ENCODE measurements at regions of chr6 and their contacts with region 1.

Region 1: DNA sequence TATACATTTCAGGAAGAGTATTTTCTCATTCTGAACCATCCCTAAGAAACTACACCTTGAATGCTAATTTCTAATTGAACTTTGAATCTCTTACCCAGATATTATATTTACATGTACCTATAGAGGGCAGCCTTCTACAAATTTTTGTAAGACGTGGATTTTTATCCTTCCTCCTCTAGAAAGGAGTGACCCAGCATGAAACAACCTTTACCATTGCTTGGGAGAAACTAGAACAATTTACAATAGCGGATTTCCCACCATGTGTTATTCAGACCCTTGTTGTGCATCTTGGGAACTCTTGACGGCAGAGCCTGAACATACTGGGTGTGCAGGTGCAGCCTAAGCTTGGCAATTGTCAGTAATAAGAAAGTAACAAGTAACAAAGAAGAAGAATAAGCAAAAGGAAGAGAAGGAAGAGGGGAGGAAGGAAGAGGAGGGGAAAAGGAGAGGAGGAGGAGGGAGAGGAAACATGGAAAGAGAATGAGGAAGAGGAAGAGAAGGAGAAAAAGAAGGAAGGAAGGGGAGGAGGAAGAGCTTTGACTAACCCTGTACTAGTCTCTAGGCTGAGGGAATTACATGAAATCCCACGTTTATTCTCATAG is 10.8 kb upstream of the TAAR1 start:
- DNase-seq: peak in 6 of 9 donors; percentile 4 to 41 (median 32)
- ATAC-seq: peak; percentile 79
- H3K4me3 ChIP-seq: no peak overlapping the region
- H3K4me3 Mint-ChIP-seq: no peak overlapping the region
- H3K27ac ChIP-seq: no peak overlapping the region
- H3K27ac Mint-ChIP-seq: no peak overlapping the region
- H3K4me1 ChIP-seq: no peaks in the 10 kb centered on the region
- H3K4me1 Mint-ChIP-seq: peaks cover 0 to 6% (median 4%) of the 10 kb centered on the region in 7 donors
- H3K27me3 ChIP-seq: no peaks in the 10 kb centered on the region
- H3K27me3 Mint-ChIP-seq: peaks cover 3 to 17% (median 9%) of the 10 kb centered on the region in 5 donors

Region 2: DNA sequence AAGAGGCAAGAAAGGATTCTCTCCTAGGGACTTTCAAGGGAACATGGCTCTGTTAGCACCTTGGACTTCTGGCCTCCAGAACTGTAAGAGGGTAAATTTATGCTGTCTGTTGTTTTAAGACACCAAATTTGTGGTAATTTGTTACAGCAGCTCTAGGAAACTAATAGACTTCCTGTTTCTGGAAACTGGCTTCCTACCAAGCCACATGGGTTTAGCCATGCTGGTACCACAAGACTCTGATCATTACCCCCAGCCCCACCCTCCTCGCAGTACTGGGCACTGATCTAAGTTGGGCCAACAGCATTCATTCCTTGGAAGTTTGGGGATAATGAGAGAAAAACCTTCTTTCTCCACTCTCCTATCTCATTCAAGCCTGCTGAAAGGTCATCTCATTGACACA is 1952.1 kb before region 1 on chr6:
- CTCF ChIA-PET with region 1: no interaction called
- POLR2A ChIA-PET with region 1: no interaction called
- intact Hi-C with region 1: no loop called
- DNase-seq: no peak
- ATAC-seq: no peak
- H3K4me3 ChIP-seq: no peak overlapping the region
- H3K4me3 Mint-ChIP-seq: peak overlapping the region in 2 of 10 donors; percentile 6 to 23
- H3K27ac ChIP-seq: no peak overlapping the region
- H3K27ac Mint-ChIP-seq: peak overlapping the region in 1 of 9 donors; percentile 16
- H3K4me1 ChIP-seq: peaks cover 0 to 14% of the 10 kb centered on the region in 2 donors
- H3K4me1 Mint-ChIP-seq: peaks cover 0 to 23% (median 11%) of the 10 kb centered on the region in 7 donors
- H3K27me3 ChIP-seq: no peaks in the 10 kb centered on the region
- H3K27me3 Mint-ChIP-seq: peaks cover 0 to 4% (median 0%) of the 10 kb centered on the region in 5 donors

Region 3: DNA sequence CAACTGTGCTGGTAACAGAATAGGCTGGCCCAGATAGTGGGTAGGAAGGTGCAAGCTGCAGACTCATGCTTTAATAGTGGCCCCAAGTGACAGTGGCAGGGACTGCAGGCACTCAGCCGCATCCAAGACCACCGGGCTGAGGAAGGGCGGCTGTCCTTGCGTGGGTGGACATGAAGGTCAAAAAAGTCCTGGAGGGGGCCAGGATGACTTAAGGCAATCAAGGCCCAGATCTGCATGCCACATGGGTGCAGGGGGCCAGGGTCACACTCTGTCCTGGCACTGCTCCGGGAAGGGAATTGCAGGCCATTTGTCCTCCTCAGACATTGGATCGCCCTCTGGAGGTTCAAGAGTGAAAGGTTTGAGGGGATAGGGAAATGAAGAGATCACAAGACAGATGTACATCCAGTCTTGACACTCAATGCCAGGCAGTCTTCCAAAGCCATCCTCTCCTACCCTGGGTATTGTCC is 98.3 kb after region 1 on chr6:
- CTCF ChIA-PET with region 1: interaction called, 8 read pairs
- POLR2A ChIA-PET with region 1: no interaction called
- intact Hi-C with region 1: loop called (anchors 1 kb)
- DNase-seq: peak in 6 of 9 donors; percentile 7 to 23 (median 11)
- ATAC-seq: peak; percentile 79
- H3K4me3 ChIP-seq: no peak overlapping the region
- H3K4me3 Mint-ChIP-seq: no peak overlapping the region
- H3K27ac ChIP-seq: no peak overlapping the region
- H3K27ac Mint-ChIP-seq: peak overlapping the region in 2 of 9 donors; percentile 14 to 40
- H3K4me1 ChIP-seq: peaks cover 8 to 9% of the 10 kb centered on the region in 2 donors
- H3K4me1 Mint-ChIP-seq: peaks cover 13 to 20% (median 15%) of the 10 kb centered on the region in 7 donors
- H3K27me3 ChIP-seq: no peaks in the 10 kb centered on the region
- H3K27me3 Mint-ChIP-seq: peaks cover 0 to 2% (median 0%) of the 10 kb centered on the region in 5 donors

Region 4: GRCh38 chr6:132798869-132799538 is 129.2 kb after region 1 on chr6:
- CTCF ChIA-PET with region 1: interaction called, 15 read pairs
- POLR2A ChIA-PET with region 1: no interaction called
- intact Hi-C with region 1: loop called (anchors 1 kb)
- DNase-seq: peak; percentile 35 to 70 (median 64)
- ATAC-seq: peak; percentile 91
- H3K4me3 ChIP-seq: no peak overlapping the region
- H3K4me3 Mint-ChIP-seq: no peak overlapping the region
- H3K27ac ChIP-seq: no peak overlapping the region
- H3K27ac Mint-ChIP-seq: peak overlapping the region in 1 of 9 donors; percentile 87
- H3K4me1 ChIP-seq: no peaks in the 10 kb centered on the region
- H3K4me1 Mint-ChIP-seq: peaks cover 6 to 49% (median 40%) of the 10 kb centered on the region in 7 donors
- H3K27me3 ChIP-seq: no peaks in the 10 kb centered on the region
- H3K27me3 Mint-ChIP-seq: peaks cover 0 to 12% (median 0%) of the 10 kb centered on the region in 5 donors

Region 5: GRCh38 chr6:132820629-132821381 is 151.0 kb after region 1 on chr6:
- CTCF ChIA-PET with region 1: interaction called, 3 read pairs
- POLR2A ChIA-PET with region 1: no interaction called
- intact Hi-C with region 1: loop called in 1 of 2 experiments (anchors 1 kb)
- DNase-seq: no peak
- ATAC-seq: peak; percentile 21
- H3K4me3 ChIP-seq: no peak overlapping the region
- H3K4me3 Mint-ChIP-seq: no peak overlapping the region
- H3K27ac ChIP-seq: peak overlapping the region; percentile 17
- H3K27ac Mint-ChIP-seq: peak overlapping the region in 8 of 9 donors; percentile 55 to 88 (median 86)
- H3K4me1 ChIP-seq: peaks cover 14 to 18% of the 10 kb centered on the region in 2 donors
- H3K4me1 Mint-ChIP-seq: peaks cover 28 to 64% (median 59%) of the 10 kb centered on the region in 7 donors
- H3K27me3 ChIP-seq: no peaks in the 10 kb centered on the region
- H3K27me3 Mint-ChIP-seq: peaks cover 0 to 2% (median 0%) of the 10 kb centered on the region in 5 donors

Region 6: DNA sequence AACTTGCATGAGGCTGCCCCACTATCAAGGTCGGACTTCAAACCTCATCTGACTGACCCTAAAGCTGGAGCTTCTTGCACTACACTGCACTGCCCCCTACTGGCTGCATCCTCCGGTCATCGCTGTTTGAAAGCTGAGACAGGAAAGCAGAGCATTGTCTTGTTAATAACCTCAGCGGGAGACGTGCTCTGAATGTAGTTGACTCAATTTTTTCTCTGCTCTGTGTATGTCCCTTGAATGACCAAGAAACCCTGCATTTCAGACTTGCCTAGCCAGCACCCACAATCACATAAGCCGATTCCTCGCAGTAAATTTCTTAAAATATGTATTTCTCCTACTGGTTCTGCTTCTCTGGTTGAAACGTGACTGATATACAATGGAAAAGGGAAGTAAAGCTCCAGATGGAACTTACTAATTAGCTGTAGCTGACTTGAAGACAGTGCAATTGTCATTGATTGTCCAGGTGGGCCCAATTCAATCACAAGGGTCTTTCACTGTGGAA is 1246.9 kb after region 1 on chr6:
- CTCF ChIA-PET with region 1: interaction called, 3 read pairs
- POLR2A ChIA-PET with region 1: no interaction called
- intact Hi-C with region 1: loop called in 1 of 2 experiments (anchors 1 kb)
- DNase-seq: peak; percentile 15 to 74 (median 49)
- ATAC-seq: peak; percentile 81
- H3K4me3 ChIP-seq: no peak overlapping the region
- H3K4me3 Mint-ChIP-seq: peak overlapping the region in 5 of 10 donors; percentile 3 to 54 (median 10)
- H3K27ac ChIP-seq: no peak overlapping the region
- H3K27ac Mint-ChIP-seq: no peak overlapping the region
- H3K4me1 ChIP-seq: no peaks in the 10 kb centered on the region
- H3K4me1 Mint-ChIP-seq: peaks cover 0 to 5% (median 4%) of the 10 kb centered on the region in 7 donors
- H3K27me3 ChIP-seq: peaks cover 0 to 4% of the 10 kb centered on the region in 2 donors
- H3K27me3 Mint-ChIP-seq: peaks cover 18 to 45% (median 29%) of the 10 kb centered on the region in 5 donors